PC-3 (cell line): ENCODE measurements at regions of chr3 and their contacts with region 1.

Region 1: GRCh38 chr3:104460477-104461406 is 906.0 kb upstream of the ALCAM start:
- DNase-seq: peak; percentile 77
- ATAC-seq: peak; percentile 87
- H3K4me3 ChIP-seq: no peak overlapping the region
- H3K27ac ChIP-seq: no peak overlapping the region
- H3K4me1 ChIP-seq: peaks cover 11% of the 10 kb centered on the region
- H3K27me3 ChIP-seq: no peaks in the 10 kb centered on the region
- CTCF ChIP-seq: peak; percentile 78

Region 2: GRCh38 chr3:103170651-103171050 is 1290.1 kb before region 1 on chr3:
- CTCF ChIA-PET with region 1: no interaction called
- POLR2A ChIA-PET with region 1: no interaction called
- intact Hi-C with region 1: no loop called
- DNase-seq: no peak
- ATAC-seq: no peak
- H3K4me3 ChIP-seq: no peak overlapping the region
- H3K27ac ChIP-seq: no peak overlapping the region
- H3K4me1 ChIP-seq: peaks cover 10% of the 10 kb centered on the region; the same call in 1 of the 2 replicates
- H3K27me3 ChIP-seq: no peaks in the 10 kb centered on the region
- CTCF ChIP-seq: no peak

Region 3: GRCh38 chr3:104005816-104006215 is 454.9 kb before region 1 on chr3:
- CTCF ChIA-PET with region 1: no interaction called
- POLR2A ChIA-PET with region 1: no interaction called
- intact Hi-C with region 1: no loop called
- DNase-seq: peak; percentile 64
- ATAC-seq: peak; percentile 94
- H3K4me3 ChIP-seq: no peak overlapping the region
- H3K27ac ChIP-seq: no peak overlapping the region
- H3K4me1 ChIP-seq: peaks cover 10% of the 10 kb centered on the region; the same call in 1 of the 2 replicates
- H3K27me3 ChIP-seq: no peaks in the 10 kb centered on the region
- CTCF ChIP-seq: no peak

Region 4: DNA sequence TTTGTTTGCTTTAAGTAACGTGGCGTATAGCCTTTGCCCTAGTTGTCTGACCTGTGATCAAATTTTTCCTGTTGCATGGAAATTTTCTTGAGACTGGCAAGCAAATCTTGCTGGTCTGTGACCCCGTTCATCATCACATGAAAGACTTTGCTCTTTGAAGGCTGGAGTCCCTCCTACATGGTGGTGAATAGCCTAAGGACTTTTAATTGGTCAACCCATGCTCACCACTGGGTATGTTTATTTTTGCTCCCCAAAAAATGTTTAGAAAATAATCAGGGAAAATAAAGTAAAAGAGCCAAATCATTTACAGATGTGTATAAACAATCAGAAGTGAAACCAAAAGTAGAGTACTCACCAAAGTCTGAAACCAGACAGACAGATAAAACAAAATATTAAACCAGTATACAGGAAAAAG is 169.3 kb before region 1 on chr3:
- CTCF ChIA-PET with region 1: no interaction called
- POLR2A ChIA-PET with region 1: no interaction called
- intact Hi-C with region 1: loop called (anchors 10 kb)
- DNase-seq: no peak
- ATAC-seq: no peak
- H3K4me3 ChIP-seq: no peak overlapping the region
- H3K27ac ChIP-seq: no peak overlapping the region
- H3K4me1 ChIP-seq: no peaks in the 10 kb centered on the region
- H3K27me3 ChIP-seq: no peaks in the 10 kb centered on the region
- CTCF ChIP-seq: no peak